Heart right ventricle (tissue), 16 donors: ENCODE measurements at regions of chr1 and their contacts with region 1.

Region 1: GRCh38 chr1:235045034-235045720 is 83.5 kb downstream of the TOMM20 start:
- DNase-seq: no peak
- ATAC-seq: no peak
- H3K4me3 ChIP-seq: no peak overlapping the region
- H3K27ac ChIP-seq: peak overlapping the region in 3 of 10 donors; percentile 15 to 95 (median 92)
- H3K4me1 ChIP-seq: peaks cover 5 to 46% (median 21%) of the 10 kb centered on the region in 9 donors
- H3K27me3 ChIP-seq: no peaks in the 10 kb centered on the region
- CTCF ChIP-seq: no peak

Region 2: GRCh38 chr1:234987415-234988154 is 57.6 kb before region 1 on chr1:
- intact Hi-C with region 1: loop called in 2 of 10 experiments (anchors 2 to 10 kb)
- DNase-seq: peak; percentile 58 to 82
- ATAC-seq: peak; percentile 74 to 93 (median 90)
- H3K4me3 ChIP-seq: no peak overlapping the region
- H3K27ac ChIP-seq: peak overlapping the region; percentile 77 to 98 (median 88)
- H3K4me1 ChIP-seq: peaks cover 18 to 66% (median 44%) of the 10 kb centered on the region in 9 donors
- H3K27me3 ChIP-seq: no peaks in the 10 kb centered on the region
- CTCF ChIP-seq: no peak

Region 3: DNA sequence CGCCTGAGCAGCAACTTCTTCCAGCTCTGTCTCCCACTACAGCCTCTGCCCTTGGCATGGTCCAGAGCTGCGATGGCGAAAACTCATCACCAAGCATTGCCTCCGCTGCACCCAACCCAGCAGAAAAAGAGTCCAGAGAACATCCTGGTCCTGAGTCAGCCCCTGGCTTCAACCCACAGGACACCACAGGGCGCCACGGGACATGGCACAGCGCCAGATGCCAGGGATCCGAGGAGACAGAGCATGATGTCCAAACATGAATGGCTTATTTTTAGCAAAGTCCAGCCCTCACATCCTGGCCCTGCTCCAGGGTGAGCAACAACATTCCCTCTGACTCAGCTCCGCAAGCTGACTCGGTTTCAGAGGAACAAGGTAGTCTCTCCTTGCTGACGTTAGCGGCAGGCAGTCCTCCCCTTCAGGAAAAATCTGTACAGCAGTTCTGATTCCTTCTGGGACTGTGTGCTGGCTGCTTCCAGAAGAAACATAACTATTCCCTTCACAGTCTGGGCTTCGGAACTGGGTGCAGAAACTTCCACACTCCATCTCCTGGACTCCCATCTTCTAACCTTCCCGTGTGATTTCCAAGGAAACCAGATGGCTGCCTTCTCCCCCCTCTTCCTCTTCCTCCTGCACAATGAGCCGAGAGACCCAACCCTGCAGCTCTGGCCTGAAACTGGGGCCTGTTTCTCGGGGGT is 47.8 kb before region 1 on chr1:
- intact Hi-C with region 1: loop called in 3 of 10 experiments (anchors 5 to 10 kb)
- DNase-seq: peak; percentile 97
- ATAC-seq: peak; percentile 91 to 98 (median 96)
- H3K4me3 ChIP-seq: peak overlapping the region in 5 of 10 donors; percentile 6 to 13 (median 12)
- H3K27ac ChIP-seq: peak overlapping the region; percentile 87 to 95 (median 92)
- H3K4me1 ChIP-seq: peaks cover 21 to 35% (median 30%) of the 10 kb centered on the region in 9 donors
- H3K27me3 ChIP-seq: no peaks in the 10 kb centered on the region
- CTCF ChIP-seq: no peak

Region 4: DNA sequence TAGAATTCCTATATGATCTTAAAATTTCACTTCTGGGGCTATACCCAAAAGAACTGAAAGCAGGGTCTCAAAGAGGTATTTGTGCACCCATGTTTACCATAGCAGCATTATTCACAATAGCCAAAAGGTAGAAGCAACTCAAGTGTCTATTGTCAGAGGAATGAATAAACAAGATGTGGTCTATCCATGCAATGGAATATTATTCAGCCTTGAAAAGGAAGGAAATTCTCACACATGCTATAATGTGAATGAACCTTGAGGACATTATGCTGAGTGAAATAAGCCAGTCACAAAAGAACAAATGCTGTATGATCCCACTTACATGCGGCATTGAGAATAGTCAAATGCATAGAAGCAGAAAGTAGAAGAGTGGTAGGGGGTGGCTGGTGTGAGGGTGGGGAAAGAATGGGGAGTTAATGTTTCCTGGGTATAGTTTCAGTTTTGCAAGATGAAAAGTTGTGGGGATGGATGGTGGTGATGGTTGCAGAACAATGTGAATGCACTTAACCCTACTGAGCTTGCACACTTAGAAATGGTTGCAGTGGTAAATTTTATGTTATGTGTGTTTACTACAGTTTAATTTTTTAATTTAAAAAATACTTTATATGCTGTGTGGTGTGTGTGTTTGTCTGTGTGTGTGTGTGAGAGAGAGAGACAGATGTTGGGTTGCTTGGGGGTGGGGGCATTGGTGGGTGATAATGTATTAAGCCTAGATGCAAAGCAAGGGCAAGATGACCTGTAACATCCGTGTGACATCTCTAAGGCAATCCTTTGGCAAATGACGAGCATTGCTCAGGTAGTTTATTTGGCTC is 38.8 kb before region 1 on chr1:
- intact Hi-C with region 1: loop called in 5 of 10 experiments (anchors 5 kb)
- DNase-seq: no peak
- ATAC-seq: no peak
- H3K4me3 ChIP-seq: no peak overlapping the region
- H3K27ac ChIP-seq: no peak overlapping the region
- H3K4me1 ChIP-seq: peaks cover 0 to 20% (median under 1%) of the 10 kb centered on the region in 9 donors
- H3K27me3 ChIP-seq: no peaks in the 10 kb centered on the region
- CTCF ChIP-seq: no peak

Region 5: DNA sequence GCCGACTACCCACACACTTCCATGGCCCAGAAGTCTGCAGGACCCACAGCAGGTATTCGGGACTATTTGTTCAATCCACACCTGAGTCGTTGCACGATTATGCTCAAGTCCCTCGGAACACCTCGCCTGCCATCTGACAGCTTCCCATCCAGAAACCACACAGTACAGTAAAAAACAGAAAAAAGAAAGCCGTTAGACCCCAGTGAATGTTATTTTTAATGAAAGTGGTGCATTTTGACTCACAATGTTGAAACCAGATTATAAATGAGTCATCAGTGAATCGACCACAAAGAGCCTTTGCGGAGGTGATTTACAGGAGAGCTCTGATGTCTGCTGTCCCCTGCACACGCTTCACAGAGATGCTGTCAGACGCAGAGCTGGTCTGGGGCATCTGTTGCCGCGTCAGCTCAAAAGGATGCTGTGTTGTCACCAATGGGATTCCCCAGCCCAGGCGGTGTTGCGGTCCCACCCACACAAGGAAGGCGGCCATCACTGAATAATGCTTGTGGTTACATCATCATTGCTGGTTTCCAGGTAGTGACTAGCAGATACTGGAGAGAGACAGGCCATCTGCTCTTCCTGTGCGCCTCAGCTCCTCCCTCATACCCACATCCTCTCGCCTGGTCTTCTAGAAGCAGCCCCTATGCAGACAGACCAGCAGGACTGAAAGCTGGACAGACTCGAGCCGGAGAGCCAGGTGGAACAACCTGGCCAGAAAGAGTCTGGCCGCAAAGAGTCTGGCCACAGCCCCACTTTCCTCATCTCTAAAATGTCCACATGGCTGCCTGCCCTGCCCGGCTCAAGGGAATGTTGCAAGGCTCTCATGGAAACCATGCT is 33.4 kb before region 1 on chr1:
- intact Hi-C with region 1: loop called in 4 of 10 experiments (anchors 5 kb)
- DNase-seq: peak; percentile 45 to 72
- ATAC-seq: peak; percentile 68 to 94 (median 80)
- H3K4me3 ChIP-seq: peak overlapping the region in 1 of 10 donors; percentile 6
- H3K27ac ChIP-seq: peak overlapping the region in 9 of 10 donors; percentile 16 to 88 (median 62)
- H3K4me1 ChIP-seq: peaks cover 3 to 41% (median 17%) of the 10 kb centered on the region in 9 donors
- H3K27me3 ChIP-seq: no peaks in the 10 kb centered on the region
- CTCF ChIP-seq: no peak

Region 6: DNA sequence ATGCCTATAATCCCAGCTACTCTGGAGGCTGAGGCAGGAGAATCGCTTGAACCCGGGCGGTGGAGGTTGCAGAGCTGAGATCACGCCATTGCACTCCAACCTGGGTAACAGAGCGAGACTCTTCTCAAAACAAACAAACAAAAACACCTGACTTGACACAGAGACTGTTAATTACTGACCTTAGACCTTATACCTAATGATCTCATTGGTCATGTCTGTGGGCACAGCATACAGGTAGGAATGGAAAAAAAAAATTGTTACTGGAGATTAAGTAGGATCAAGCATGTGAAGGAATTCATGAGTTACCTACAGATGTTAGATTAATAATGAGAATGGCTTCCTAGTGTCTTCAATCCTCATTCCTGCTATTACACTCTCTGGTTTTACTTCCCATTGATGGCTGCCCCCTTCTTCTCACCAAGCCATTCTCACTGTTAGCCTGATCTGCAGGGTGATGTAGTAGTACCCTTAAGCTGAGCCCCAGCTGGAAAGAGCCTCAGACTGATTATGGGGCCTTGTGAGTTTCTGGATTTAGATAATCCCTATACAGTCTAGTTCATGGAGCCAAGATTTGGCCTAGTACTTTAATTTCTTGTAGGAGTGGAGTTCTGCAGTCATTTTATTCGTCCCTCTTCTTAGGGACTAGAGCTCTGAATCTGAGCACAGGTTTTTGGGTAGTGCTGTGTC is 330.9 kb after region 1 on chr1:
- intact Hi-C with region 1: no loop called
- DNase-seq: no peak
- ATAC-seq: no peak
- H3K4me3 ChIP-seq: no peak overlapping the region
- H3K27ac ChIP-seq: no peak overlapping the region
- H3K4me1 ChIP-seq: no peaks in the 10 kb centered on the region
- H3K27me3 ChIP-seq: no peaks in the 10 kb centered on the region
- CTCF ChIP-seq: no peak